ENCODE measurements at regions of chr22 and their contacts with region 1.

Region 1: DNA sequence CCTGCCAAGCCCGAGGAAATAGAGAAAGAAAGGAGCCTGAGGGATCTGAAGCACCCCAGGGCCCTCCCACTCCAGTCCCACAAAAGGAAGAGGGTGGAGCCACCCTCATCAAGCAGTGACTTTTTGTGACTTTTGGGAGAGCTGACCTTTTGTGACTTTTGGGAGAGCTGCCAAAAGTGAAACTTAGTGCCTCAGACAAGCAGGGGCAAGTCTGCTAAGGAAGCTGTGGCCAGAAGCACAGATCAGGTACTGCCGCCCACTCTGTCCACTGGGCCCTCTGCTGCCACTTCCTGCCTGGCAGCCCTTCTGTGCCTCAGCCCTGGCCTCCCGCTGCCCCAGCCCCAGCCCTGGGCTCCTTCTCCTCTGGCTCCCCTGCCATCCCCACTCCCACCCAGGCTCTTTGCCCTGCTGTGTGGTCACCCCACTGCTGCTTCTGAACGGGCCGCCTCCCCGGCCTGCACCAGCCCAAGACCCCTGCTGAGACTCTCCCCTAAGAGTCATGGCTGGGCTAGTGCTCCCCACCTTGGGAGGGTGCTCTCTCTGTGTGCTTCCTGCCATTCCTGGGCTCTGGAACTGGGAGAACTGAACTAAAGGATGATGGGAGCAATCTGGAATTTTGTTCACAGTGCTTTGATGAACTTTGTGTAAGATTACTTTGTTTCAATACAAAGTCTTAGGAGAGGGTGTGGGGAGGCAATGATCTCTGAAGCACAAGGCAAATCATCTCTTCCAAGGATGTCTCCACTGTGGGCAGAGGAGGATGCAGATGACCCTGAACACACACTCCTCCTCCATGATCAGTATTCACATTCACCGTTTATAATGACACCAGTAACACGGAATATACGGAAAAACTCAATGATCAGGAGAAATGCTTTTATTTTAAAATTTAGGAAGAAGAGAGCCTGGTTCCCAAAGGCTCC is at the start of gene APOBEC3H:
- DNase-seq: peak; percentile 82
- ATAC-seq: peak; percentile 60
- H3K4me3 Mint-ChIP-seq: peak within 1 kb of the TSS; percentile 74
- H3K27ac Mint-ChIP-seq: peak within 1 kb of the TSS; percentile 92
- H3K4me1 Mint-ChIP-seq: peaks cover 80% of the 10 kb centered on the region
- H3K27me3 Mint-ChIP-seq: no peaks in the 10 kb centered on the region
- CTCF ChIP-seq: no peak
- total RNA-seq, gene APOBEC3H: 6.8 to 7.1 TPM

Region 2: DNA sequence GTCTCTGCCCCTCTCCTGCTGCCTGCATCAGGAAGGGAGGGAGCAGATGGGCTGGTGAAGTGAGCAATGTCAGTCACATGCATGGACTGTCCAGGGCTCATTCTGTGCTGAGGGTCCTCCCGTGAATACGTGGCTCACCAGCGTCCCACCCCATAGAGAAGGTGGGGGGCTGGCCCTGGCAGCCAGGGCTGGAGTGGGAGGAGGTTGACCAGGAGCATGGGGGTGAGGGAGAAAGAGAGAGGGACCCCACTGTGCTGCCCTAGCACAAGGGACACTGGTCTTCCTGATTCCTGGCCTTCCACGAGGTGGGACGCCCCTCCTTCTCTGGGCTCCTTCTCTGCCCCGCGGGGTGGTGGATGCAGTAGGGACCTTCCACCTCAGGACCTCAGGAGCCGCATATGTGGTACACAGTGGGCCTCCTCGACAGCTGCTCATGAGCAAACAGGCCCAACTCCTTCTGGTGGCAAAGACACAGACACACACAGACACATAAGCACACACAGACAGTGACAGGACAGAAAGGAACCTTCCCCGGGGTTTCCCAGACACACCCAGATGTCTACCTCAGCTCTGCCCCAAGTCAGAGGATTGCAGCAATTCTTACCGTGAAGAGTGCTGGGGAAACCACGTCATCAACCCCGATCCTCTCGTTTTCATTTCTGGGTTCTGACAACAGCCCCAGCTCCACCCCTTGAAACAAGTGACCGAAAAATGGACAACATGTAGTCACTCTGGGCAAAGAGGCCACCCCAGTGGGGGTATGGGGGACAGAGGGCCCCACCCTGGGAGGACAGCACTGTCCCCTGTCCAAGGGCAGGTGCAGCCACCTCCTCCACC is 143.6 kb before region 1 on chr22:
- CTCF ChIA-PET with region 1: no interaction called
- POLR2A ChIA-PET with region 1: no interaction called
- intact Hi-C with region 1: no loop called
- DNase-seq: peak; percentile 89
- ATAC-seq: peak; percentile 93
- H3K4me3 Mint-ChIP-seq: peak overlapping the region; percentile 22
- H3K27ac Mint-ChIP-seq: peak overlapping the region; percentile 89
- H3K4me1 Mint-ChIP-seq: peaks cover 28% of the 10 kb centered on the region
- H3K27me3 Mint-ChIP-seq: peaks cover 9% of the 10 kb centered on the region
- CTCF ChIP-seq: no peak

Region 3: GRCh38 chr22:39109361-39109760 is 12.0 kb after region 1 on chr22:
- CTCF ChIA-PET with region 1: interaction called, 10 read pairs
- POLR2A ChIA-PET with region 1: interaction called, 5 read pairs
- intact Hi-C with region 1: no loop called
- DNase-seq: no peak
- ATAC-seq: no peak
- H3K4me3 Mint-ChIP-seq: no peak overlapping the region
- H3K27ac Mint-ChIP-seq: no peak overlapping the region
- H3K4me1 Mint-ChIP-seq: peaks cover 16% of the 10 kb centered on the region
- H3K27me3 Mint-ChIP-seq: no peaks in the 10 kb centered on the region
- CTCF ChIP-seq: no peak

Region 4: DNA sequence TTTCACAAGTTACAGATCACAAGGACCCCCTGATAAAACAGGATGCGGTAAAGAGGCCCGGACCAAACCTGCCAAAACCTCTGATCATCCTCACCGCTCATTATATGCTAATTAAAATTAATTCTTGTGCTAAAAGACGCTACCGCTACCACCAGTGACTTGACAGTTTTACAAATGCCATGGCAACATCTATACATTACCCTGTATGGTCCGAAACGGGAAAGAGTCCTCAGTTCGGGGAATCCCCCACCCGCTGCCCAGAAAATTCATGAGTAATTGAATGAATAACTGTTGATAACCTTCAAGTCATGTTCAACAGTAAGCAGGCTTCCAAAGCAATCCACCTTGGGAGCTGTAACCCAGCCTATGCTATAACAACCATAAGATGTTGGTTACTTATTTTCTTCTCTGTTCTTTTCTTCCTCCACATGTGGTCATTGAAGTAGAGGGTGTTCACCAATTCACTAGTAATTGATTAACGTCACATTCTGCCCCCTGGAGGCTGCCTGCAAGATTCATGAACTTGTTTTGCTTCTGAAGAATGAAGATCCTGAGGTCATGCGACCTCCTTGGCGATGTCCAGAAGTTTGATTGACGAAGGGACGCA is 20.3 kb after region 1 on chr22:
- CTCF ChIA-PET with region 1: interaction called, 9 read pairs
- POLR2A ChIA-PET with region 1: interaction called, 4 read pairs
- intact Hi-C with region 1: loop called (anchors 2 kb)
- DNase-seq: peak; percentile 91
- ATAC-seq: peak; percentile 70
- H3K4me3 Mint-ChIP-seq: peak overlapping the region; percentile 48
- H3K27ac Mint-ChIP-seq: peak overlapping the region; percentile 93
- H3K4me1 Mint-ChIP-seq: peaks cover 59% of the 10 kb centered on the region
- H3K27me3 Mint-ChIP-seq: no peaks in the 10 kb centered on the region
- CTCF ChIP-seq: peak; percentile 66

Region 5: GRCh38 chr22:39384750-39385480 is 287.6 kb after region 1 on chr22:
- CTCF ChIA-PET with region 1: no interaction called
- POLR2A ChIA-PET with region 1: no interaction called
- intact Hi-C with region 1: no loop called
- DNase-seq: no peak
- ATAC-seq: no peak
- H3K4me3 Mint-ChIP-seq: no peak overlapping the region
- H3K27ac Mint-ChIP-seq: no peak overlapping the region
- H3K4me1 Mint-ChIP-seq: peaks cover 8% of the 10 kb centered on the region
- H3K27me3 Mint-ChIP-seq: no peaks in the 10 kb centered on the region
- CTCF ChIP-seq: no peak